HCT116 (cell line): ENCODE measurements at regions of chr11 and their contacts with region 1.

Region 1: GRCh38 chr11:93741094-93741881 is at the starts of genes C11orf54 and TAF1D:
- DNase-seq: peak; percentile 93
- ATAC-seq: peak; percentile 92
- H3K4me3 ChIP-seq: peak within 1 kb of the TSS; percentile 79 to 86
- H3K27ac ChIP-seq: peak within 1 kb of the TSS; percentile 86
- H3K4me1 ChIP-seq: peaks cover 20 to 31% of the 10 kb centered on the region in 2 experiments
- H3K27me3 ChIP-seq: no peaks in the 10 kb centered on the region
- CTCF ChIP-seq: no peak
- POLR2A ChIP-seq: peak; percentile 94
- RAD21 ChIP-seq: no peak
- total RNA-seq, gene C11orf54: 26.1 TPM
- total RNA-seq, gene TAF1D: 267 TPM

Region 2: GRCh38 chr11:93577286-93577685 is 164.0 kb before region 1 on chr11:
- CTCF ChIA-PET with region 1: no interaction called
- POLR2A ChIA-PET with region 1: no interaction called
- RAD21 ChIA-PET with region 1: no interaction called
- intact Hi-C with region 1: no loop called
- DNase-seq: no peak
- ATAC-seq: no peak
- H3K4me3 ChIP-seq: no peak overlapping the region
- H3K27ac ChIP-seq: no peak overlapping the region
- H3K4me1 ChIP-seq: peaks cover 0 to 10% of the 10 kb centered on the region in 2 experiments; a peak in 1 of 4 replicates
- H3K27me3 ChIP-seq: no peaks in the 10 kb centered on the region
- CTCF ChIP-seq: no peak
- POLR2A ChIP-seq: no peak
- RAD21 ChIP-seq: no peak

Region 3: DNA sequence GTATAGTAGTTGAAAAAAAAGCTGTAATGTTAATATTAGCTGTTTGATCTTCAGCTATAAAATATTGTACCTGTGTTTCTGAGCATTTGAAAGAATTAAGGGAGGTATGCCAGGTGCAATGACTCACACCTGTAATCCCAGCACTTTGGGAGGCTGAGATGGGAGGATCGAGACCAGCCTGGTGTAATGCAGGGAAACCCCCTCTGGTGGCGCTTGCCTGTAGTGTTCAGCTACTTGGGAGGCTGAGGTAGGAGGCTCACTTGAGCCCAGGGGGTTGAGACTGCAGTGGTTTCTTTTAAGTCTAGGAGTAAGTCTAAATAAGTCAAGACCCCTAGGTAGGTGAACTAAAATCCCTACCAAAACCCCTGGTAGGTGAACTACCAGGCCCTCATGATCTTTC is 37.1 kb before region 1 on chr11:
- CTCF ChIA-PET with region 1: no interaction called
- POLR2A ChIA-PET with region 1: no interaction called
- RAD21 ChIA-PET with region 1: no interaction called
- intact Hi-C with region 1: no loop called
- DNase-seq: no peak
- ATAC-seq: peak; percentile 73
- H3K4me3 ChIP-seq: no peak overlapping the region
- H3K27ac ChIP-seq: no peak overlapping the region
- H3K4me1 ChIP-seq: no peaks in the 10 kb centered on the region
- H3K27me3 ChIP-seq: no peaks in the 10 kb centered on the region
- CTCF ChIP-seq: peak in 2 of 3 experiments; percentile 42 to 57; a peak in 4 of 6 replicates
- POLR2A ChIP-seq: no peak
- RAD21 ChIP-seq: no peak

Region 4: DNA sequence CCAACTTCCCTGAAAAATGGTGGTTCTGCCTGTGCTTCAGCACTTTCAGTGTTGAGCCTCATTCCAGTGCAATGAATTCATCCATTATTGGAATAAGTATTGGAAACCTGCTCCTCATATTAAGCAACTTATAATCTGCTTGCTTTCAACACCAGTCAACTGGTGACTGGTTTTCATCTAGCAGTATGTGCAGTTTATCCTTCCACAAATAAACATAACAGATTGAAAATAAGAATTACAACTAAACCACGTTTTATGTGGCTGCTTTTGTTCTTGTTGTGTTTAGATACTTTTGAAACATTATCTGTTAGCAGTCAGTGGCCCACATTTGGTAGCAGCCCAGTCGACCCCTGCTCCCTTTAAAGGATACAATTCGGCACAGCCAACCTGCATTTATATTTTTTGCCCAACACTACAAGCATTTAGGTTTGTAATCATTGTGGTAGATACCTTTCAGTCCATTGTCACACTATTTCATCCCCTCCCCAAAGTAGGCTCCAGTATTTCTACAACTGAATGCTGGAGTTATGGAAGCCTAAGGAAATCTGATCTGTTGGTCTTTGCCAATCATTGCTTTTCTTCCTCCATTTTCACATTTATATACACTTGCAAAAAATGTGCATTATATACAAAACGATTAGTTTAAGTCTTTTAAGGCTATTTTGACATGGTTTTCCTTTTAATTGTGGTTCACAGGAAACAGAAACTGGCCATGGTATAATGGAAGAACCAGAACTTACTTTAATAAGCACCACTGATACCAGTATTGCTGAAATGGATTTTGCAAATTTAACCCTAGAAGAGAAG is 13.1 kb before region 1 on chr11:
- CTCF ChIA-PET with region 1: interaction called, 3 read pairs
- POLR2A ChIA-PET with region 1: interaction called, 43 read pairs
- RAD21 ChIA-PET with region 1: no interaction called
- intact Hi-C with region 1: no loop called
- DNase-seq: no peak
- ATAC-seq: peak; percentile 24; the same call in 1 of the 2 replicates
- H3K4me3 ChIP-seq: no peak overlapping the region
- H3K27ac ChIP-seq: 0 out of 2 replicates have a peak overlapping the region, but pooled peaks have one; percentile 11
- H3K4me1 ChIP-seq: no peaks in the 10 kb centered on the region
- H3K27me3 ChIP-seq: no peaks in the 10 kb centered on the region
- CTCF ChIP-seq: no peak
- POLR2A ChIP-seq: no peak
- RAD21 ChIP-seq: no peak

Region 5: DNA sequence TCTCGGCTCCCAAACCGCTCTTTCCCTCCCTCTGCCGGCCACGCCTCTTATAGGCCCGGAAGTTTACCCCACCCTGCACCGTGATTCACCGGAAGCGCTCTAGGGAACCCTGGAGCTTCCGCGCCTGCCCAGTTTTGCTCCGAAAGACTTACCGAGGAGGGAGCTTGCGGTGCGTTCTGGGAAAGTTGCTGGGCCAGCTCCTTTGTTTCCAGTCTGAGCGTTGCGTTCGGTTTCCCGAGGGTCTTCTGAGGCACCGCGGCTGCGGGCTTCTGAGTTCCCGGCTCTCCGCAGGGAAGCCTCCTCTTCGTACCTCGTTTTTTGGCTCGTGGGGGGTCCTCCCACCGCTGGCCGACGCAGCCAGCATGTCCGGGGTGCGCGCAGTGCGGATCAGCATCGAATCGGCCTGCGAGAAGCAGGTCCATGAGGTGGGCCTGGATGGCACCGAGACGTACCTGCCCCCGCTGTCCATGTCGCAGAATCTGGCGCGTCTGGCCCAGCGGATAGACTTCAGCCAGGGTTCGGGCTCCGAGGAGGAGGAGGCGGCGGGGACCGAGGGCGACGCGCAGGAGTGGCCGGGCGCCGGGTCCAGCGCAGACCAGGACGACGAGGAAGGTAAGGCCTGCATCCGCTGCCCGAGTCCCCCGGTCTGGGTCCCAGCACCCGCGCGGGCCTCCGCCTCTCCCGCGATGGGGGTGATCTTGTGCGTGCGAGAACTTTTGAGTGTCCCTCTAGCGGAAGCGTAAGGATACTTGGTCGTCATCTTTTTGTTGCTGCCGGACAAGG is 43.1 kb after region 1 on chr11 and contains the start of gene MED17:
- CTCF ChIA-PET with region 1: interaction called, 4 read pairs
- POLR2A ChIA-PET with region 1: interaction called, 39 read pairs
- RAD21 ChIA-PET with region 1: interaction called in 1 of 2 experiments, 4 read pairs
- intact Hi-C with region 1: loop called (anchors 2 kb)
- DNase-seq: peak; percentile 81
- ATAC-seq: peak; percentile 93
- H3K4me3 ChIP-seq: peak within 1 kb of the TSS; percentile 75 to 93
- H3K27ac ChIP-seq: peak within 1 kb of the TSS; percentile 87
- H3K4me1 ChIP-seq: peaks cover 9 to 12% of the 10 kb centered on the region in 2 experiments; a peak in 3 of 4 replicates
- H3K27me3 ChIP-seq: no peaks in the 10 kb centered on the region
- CTCF ChIP-seq: peak in 2 of 3 experiments; percentile 46 to 47; a peak in 4 of 6 replicates
- POLR2A ChIP-seq: peak; percentile 97
- RAD21 ChIP-seq: no peak
- total RNA-seq, gene MED17: 41.1 TPM

Region 6: DNA sequence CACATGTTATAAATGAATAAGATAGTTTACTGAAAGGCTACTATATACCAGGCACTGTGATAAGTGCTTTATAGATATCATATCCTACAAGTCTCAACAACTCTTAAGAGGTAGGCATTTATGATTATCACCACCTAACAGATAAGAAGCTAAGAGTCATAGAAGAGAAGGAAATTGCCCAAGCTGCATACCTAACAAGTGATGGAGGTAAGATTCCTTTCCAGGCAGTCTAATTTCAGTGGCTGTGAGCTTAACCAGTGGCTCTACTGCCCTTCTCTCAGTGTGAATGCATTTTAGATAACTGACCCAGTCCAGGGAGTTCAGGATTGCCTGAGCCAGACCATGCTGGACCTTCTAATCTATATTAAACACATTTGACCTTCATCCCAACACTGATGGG is 319.1 kb after region 1 on chr11:
- CTCF ChIA-PET with region 1: no interaction called
- POLR2A ChIA-PET with region 1: no interaction called
- RAD21 ChIA-PET with region 1: no interaction called
- intact Hi-C with region 1: no loop called
- DNase-seq: no peak
- ATAC-seq: no peak
- H3K4me3 ChIP-seq: no peak overlapping the region
- H3K27ac ChIP-seq: no peak overlapping the region
- H3K4me1 ChIP-seq: no peaks in the 10 kb centered on the region
- H3K27me3 ChIP-seq: 0 out of 2 replicates have a peak, but pooled peaks cover 7% of the 10 kb centered on the region
- CTCF ChIP-seq: no peak
- POLR2A ChIP-seq: no peak
- RAD21 ChIP-seq: no peak

Region 7: GRCh38 chr11:94128746-94129511 is 387.6 kb after region 1 on chr11 and contains the start of gene PANX1:
- CTCF ChIA-PET with region 1: no interaction called
- POLR2A ChIA-PET with region 1: interaction called, 3 read pairs
- RAD21 ChIA-PET with region 1: no interaction called
- intact Hi-C with region 1: loop called (anchors 2 kb)
- DNase-seq: peak; percentile 56
- ATAC-seq: peak; percentile 85
- H3K4me3 ChIP-seq: peak within 1 kb of the TSS; percentile 60 to 86
- H3K27ac ChIP-seq: peak within 1 kb of the TSS; percentile 86
- H3K4me1 ChIP-seq: peaks cover 12 to 48% of the 10 kb centered on the region in 2 experiments
- H3K27me3 ChIP-seq: no peaks in the 10 kb centered on the region
- CTCF ChIP-seq: no peak
- POLR2A ChIP-seq: peak; percentile 39
- RAD21 ChIP-seq: no peak
- total RNA-seq, gene PANX1: 21.9 TPM